Activated CD4-positive, alpha-beta T cell treated with anti-CD3 and anti-CD28 coated beads, Interleukin-2, amount 10 ng/mL, durations not matched to agents 7 days and 5 days (primary cell): ENCODE measurements at regions of chr10 and their contacts with region 1.

Region 1: GRCh38 chr10:80211786-80212185 is 6.4 kb upstream of the ANXA11 start:
- DNase-seq: no peak
- H3K4me3 Mint-ChIP-seq: no peak overlapping the region
- H3K27ac Mint-ChIP-seq: no peak overlapping the region
- H3K4me1 Mint-ChIP-seq: peaks cover 18% of the 10 kb centered on the region
- H3K27me3 Mint-ChIP-seq: no peaks in the 10 kb centered on the region

Region 2: GRCh38 chr10:80000541-80000940 is 211.2 kb before region 1 on chr10:
- CTCF ChIA-PET with region 1: no interaction called
- POLR2A ChIA-PET with region 1: no interaction called
- DNase-seq: no peak
- H3K4me3 Mint-ChIP-seq: no peak overlapping the region
- H3K27ac Mint-ChIP-seq: no peak overlapping the region
- H3K4me1 Mint-ChIP-seq: no peaks in the 10 kb centered on the region
- H3K27me3 Mint-ChIP-seq: peaks cover 8% of the 10 kb centered on the region

Region 3: DNA sequence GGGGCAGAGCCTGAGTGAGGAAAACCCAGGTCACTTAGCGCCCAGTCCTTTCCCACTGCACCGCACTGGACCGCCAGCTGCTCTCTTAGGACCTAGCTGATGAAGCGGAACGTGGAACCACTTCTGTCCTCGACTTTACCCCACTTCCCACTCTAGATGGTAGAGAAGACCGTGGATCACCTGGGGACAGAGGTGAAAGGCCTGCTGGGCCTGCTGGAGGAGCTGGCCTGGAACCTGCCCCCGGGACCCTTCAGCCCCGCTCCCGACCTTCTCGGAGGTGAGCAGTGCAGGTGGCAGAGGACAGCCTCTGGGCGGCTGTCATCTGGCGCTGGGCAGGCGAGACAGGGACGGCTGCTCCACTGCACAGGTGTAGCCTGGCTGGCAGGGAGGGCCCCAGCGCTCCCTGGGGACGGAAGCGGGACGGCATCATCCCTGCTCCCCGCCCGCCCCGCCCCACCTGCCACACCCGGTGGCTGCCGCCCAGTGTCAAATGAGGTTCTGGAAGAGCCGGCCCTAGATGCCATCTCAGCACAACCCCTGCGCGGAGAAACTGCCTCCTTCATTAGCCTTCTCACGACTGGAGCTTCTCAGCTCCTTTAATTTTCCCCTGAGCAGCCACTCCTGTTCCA is 67.6 kb before region 1 on chr10:
- CTCF ChIA-PET with region 1: interaction called, 19 read pairs
- POLR2A ChIA-PET with region 1: no interaction called
- DNase-seq: peak; percentile 22
- H3K4me3 Mint-ChIP-seq: peak overlapping the region; percentile 69
- H3K27ac Mint-ChIP-seq: peak overlapping the region; percentile 70
- H3K4me1 Mint-ChIP-seq: peaks cover 21% of the 10 kb centered on the region
- H3K27me3 Mint-ChIP-seq: peaks cover 6% of the 10 kb centered on the region

Region 4: GRCh38 chr10:80180036-80180710 is 31.6 kb before region 1 on chr10:
- CTCF ChIA-PET with region 1: no interaction called
- POLR2A ChIA-PET with region 1: no interaction called
- DNase-seq: no peak
- H3K4me3 Mint-ChIP-seq: no peak overlapping the region
- H3K27ac Mint-ChIP-seq: no peak overlapping the region
- H3K4me1 Mint-ChIP-seq: peaks cover 44% of the 10 kb centered on the region
- H3K27me3 Mint-ChIP-seq: no peaks in the 10 kb centered on the region

Region 5: DNA sequence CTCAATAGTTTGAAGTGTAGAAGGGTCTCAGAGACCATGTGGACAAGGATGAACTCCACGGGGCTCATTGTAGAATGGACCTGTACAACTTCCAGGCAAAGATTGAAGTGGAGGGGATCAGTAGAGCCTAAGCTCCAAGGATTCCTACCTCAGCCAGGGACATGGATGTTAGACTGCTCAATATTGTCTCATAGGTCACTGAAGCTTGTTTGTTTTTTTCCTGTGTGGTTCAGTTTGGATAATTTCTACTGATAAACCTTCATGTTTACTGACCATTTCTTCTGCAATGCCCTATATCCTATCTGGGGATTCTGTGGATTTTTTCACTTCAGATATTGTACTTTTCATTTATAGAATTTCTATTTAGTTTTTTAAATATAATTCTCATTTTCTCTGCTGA is 153.7 kb after region 1 on chr10:
- CTCF ChIA-PET with region 1: no interaction called
- POLR2A ChIA-PET with region 1: no interaction called
- DNase-seq: no peak
- H3K4me3 Mint-ChIP-seq: no peak overlapping the region
- H3K27ac Mint-ChIP-seq: no peak overlapping the region
- H3K4me1 Mint-ChIP-seq: no peaks in the 10 kb centered on the region
- H3K27me3 Mint-ChIP-seq: peaks cover 9% of the 10 kb centered on the region